CD4-positive, alpha-beta memory T cell (primary cell): ENCODE measurements at regions of chr5 and their contacts with region 1.

Region 1: GRCh38 chr5:93620487-93621326 is 37.7 kb downstream of the NR2F1 start:
- DNase-seq: peak; percentile 63 to 79 (median 68)
- H3K4me3 ChIP-seq: peak overlapping the region; percentile 37 to 67
- H3K4me3 Mint-ChIP-seq: peak overlapping the region; percentile 81 to 97 (median 92)
- H3K27ac ChIP-seq: peak overlapping the region; percentile 36
- H3K27ac Mint-ChIP-seq: peak overlapping the region; percentile 87 to 96 (median 94)
- H3K4me1 ChIP-seq: peaks cover 21% of the 10 kb centered on the region
- H3K4me1 Mint-ChIP-seq: peaks cover 22 to 28% (median 22%) of the 10 kb centered on the region in 4 donors
- H3K27me3 ChIP-seq: no peaks in the 10 kb centered on the region
- H3K27me3 Mint-ChIP-seq: peaks cover 4 to 6% of the 10 kb centered on the region in 2 donors

Region 2: GRCh38 chr5:93674138-93674537 is 53.4 kb after region 1 on chr5:
- CTCF ChIA-PET with region 1: no interaction called
- POLR2A ChIA-PET with region 1: no interaction called
- intact Hi-C with region 1: no loop called
- DNase-seq: no peak
- H3K4me3 ChIP-seq: no peak overlapping the region
- H3K4me3 Mint-ChIP-seq: no peak overlapping the region
- H3K27ac ChIP-seq: no peak overlapping the region
- H3K27ac Mint-ChIP-seq: no peak overlapping the region
- H3K4me1 ChIP-seq: no peaks in the 10 kb centered on the region
- H3K4me1 Mint-ChIP-seq: peaks cover 0 to 3% (median 0%) of the 10 kb centered on the region in 4 donors
- H3K27me3 ChIP-seq: no peaks in the 10 kb centered on the region
- H3K27me3 Mint-ChIP-seq: no peaks in the 10 kb centered on the region

Region 3: GRCh38 chr5:93800988-93801811 is 180.5 kb after region 1 on chr5:
- CTCF ChIA-PET with region 1: interaction called, 11 read pairs
- POLR2A ChIA-PET with region 1: no interaction called
- intact Hi-C with region 1: no loop called
- DNase-seq: peak in 4 of 5 donors; percentile 36 to 44 (median 38)
- H3K4me3 ChIP-seq: no peak overlapping the region
- H3K4me3 Mint-ChIP-seq: no peak overlapping the region
- H3K27ac ChIP-seq: no peak overlapping the region
- H3K27ac Mint-ChIP-seq: no peak overlapping the region
- H3K4me1 ChIP-seq: no peaks in the 10 kb centered on the region
- H3K4me1 Mint-ChIP-seq: peaks cover 0 to 3% (median 0%) of the 10 kb centered on the region in 4 donors
- H3K27me3 ChIP-seq: no peaks in the 10 kb centered on the region
- H3K27me3 Mint-ChIP-seq: no peaks in the 10 kb centered on the region

Region 4: DNA sequence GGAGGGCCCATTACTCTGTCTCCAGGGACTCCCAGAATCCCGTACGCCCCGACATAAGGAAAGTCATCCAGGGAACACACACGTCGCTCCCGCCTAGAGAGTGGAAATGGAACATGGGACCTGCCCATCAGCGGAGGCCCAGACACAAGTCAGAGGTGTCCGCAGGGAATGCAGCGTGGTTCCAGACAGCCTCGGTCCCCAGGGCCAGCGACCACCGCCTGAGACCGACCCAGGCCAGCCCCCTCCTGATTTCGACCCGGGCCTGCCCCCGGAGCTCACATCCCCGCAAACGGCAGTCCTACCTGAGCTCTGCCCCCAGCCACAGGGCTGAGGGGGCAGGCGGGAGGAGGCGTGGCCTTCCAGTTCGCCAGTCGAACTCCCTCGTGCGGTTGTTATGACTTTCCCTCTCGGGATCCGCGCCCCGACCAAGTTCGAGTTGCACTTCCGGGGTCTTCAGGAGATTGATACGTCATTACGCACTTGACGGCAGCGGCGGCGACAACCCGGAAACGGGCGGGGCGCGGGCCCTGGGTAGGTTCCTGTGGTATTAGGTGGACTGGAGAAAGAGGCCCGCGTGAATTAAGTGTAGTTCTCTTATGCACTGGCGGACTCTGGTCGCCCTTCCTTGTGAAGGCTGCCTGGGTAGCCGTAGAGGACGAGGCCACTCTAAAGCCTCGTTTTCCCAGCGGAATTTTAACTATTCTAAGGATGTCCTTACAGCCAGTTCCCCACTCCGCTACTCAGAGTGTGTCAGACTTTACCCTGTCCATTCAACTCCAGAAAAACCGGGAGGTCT is 490.7 kb after region 1 on chr5:
- CTCF ChIA-PET with region 1: no interaction called
- POLR2A ChIA-PET with region 1: no interaction called
- intact Hi-C with region 1: loop called (anchors 5 kb)
- DNase-seq: peak; percentile 88 to 94 (median 91)
- H3K4me3 ChIP-seq: peak overlapping the region; percentile 55 to 96
- H3K4me3 Mint-ChIP-seq: peak overlapping the region; percentile 94 to 97 (median 95)
- H3K27ac ChIP-seq: peak overlapping the region; percentile 77
- H3K27ac Mint-ChIP-seq: peak overlapping the region; percentile 93 to 97 (median 96)
- H3K4me1 ChIP-seq: peaks cover 26% of the 10 kb centered on the region
- H3K4me1 Mint-ChIP-seq: peaks cover 31 to 52% (median 41%) of the 10 kb centered on the region in 4 donors
- H3K27me3 ChIP-seq: no peaks in the 10 kb centered on the region
- H3K27me3 Mint-ChIP-seq: peaks cover 0 to 8% of the 10 kb centered on the region in 2 donors